ENCODE measurements at regions of chr10 and their contacts with region 1.

Region 1: GRCh38 chr10:88932539-88933256 is 19.9 kb downstream of the ACTA2 start:
- DNase-seq: peak; percentile 58
- H3K4me3 Mint-ChIP-seq: no peak overlapping the region
- H3K27ac Mint-ChIP-seq: no peak overlapping the region
- H3K4me1 Mint-ChIP-seq: peaks cover 18% of the 10 kb centered on the region
- H3K27me3 Mint-ChIP-seq: no peaks in the 10 kb centered on the region

Region 2: DNA sequence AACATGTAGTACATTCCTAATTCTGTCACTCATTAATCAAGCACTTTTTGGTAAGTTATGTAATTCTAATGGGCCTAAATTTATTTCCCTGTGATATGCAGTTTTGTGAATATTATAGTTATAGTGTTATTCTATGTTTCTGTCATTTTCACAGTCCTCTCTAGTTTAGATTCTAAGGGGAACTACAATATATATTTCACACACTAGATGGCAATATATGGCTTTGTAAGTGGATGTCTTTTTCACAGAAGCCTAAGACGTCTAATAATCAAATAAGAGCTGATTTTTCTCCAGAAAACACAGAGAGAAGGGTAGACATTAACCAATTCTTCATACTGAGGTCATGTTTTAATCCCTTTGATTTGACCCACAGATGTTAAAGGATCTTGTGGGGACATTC is 367.6 kb before region 1 on chr10:
- CTCF ChIA-PET with region 1: interaction called, 11 read pairs
- intact Hi-C with region 1: loop called (anchors 1 kb)
- DNase-seq: no peak
- H3K4me3 Mint-ChIP-seq: no peak overlapping the region
- H3K27ac Mint-ChIP-seq: no peak overlapping the region
- H3K4me1 Mint-ChIP-seq: no peaks in the 10 kb centered on the region
- H3K27me3 Mint-ChIP-seq: no peaks in the 10 kb centered on the region

Region 3: GRCh38 chr10:88835096-88835909 is 97.4 kb before region 1 on chr10:
- CTCF ChIA-PET with region 1: interaction called, 448 read pairs
- intact Hi-C with region 1: loop called (anchors 1 kb)
- DNase-seq: peak; percentile 95
- H3K4me3 Mint-ChIP-seq: no peak overlapping the region
- H3K27ac Mint-ChIP-seq: no peak overlapping the region
- H3K4me1 Mint-ChIP-seq: peaks cover 20% of the 10 kb centered on the region
- H3K27me3 Mint-ChIP-seq: no peaks in the 10 kb centered on the region

Region 4: DNA sequence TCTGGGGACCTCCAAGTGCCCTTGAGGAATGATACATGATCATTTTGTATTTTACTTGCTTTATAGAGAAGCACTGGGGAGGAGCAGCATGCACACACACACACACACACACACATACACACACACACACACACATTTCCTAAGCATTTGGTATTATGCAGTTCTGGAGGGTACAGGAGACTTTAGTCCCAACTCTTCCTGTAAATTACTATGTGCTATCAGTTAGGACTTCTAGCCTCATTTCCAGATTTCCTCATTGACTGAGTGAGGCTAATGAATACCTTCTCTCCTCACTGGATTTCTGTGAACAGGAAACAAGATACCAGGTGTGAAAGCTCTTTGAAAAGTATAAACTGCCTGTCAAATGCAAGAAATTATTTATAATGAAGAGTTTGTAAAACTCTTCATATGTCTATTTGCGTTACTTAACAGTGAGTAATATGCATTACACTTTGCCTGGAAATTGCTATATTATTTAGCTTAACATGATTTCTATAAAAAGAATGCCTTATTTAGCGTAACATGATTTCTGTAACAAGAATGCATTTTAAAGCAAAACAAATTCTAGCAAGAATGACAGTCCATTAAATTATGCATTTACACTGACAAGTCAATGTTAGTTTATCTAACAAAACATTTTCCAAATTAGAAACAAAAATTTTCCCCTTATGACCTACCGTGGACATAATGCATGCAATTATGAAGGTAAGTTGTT is 14.3 kb before region 1 on chr10:
- CTCF ChIA-PET with region 1: interaction called, 17 read pairs
- intact Hi-C with region 1: no loop called
- DNase-seq: no peak
- H3K4me3 Mint-ChIP-seq: no peak overlapping the region
- H3K27ac Mint-ChIP-seq: no peak overlapping the region
- H3K4me1 Mint-ChIP-seq: peaks cover 9% of the 10 kb centered on the region
- H3K27me3 Mint-ChIP-seq: no peaks in the 10 kb centered on the region

Region 5: DNA sequence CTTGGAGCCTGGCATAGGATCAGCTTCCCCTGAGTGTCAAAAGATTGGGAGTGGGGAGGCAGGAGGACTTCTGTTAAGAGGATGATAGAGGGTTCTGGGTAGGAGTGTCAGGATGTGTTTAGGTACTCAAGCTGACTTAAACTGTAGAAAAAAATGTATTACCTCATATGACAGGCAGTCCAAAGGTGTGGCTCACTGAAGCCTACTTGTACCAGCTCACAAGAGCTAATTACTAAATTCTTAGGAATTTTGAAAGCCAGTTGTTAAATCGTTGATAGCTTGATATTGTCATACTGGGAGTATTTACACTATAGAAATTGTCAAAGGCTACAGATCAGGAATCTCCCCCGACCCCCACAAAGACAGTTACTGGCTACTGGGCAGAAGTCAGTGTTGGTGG is 90.0 kb after region 1 on chr10:
- CTCF ChIA-PET with region 1: interaction called, 21 read pairs
- intact Hi-C with region 1: no loop called
- DNase-seq: no peak
- H3K4me3 Mint-ChIP-seq: no peak overlapping the region
- H3K27ac Mint-ChIP-seq: no peak overlapping the region
- H3K4me1 Mint-ChIP-seq: no peaks in the 10 kb centered on the region
- H3K27me3 Mint-ChIP-seq: no peaks in the 10 kb centered on the region

Region 6: DNA sequence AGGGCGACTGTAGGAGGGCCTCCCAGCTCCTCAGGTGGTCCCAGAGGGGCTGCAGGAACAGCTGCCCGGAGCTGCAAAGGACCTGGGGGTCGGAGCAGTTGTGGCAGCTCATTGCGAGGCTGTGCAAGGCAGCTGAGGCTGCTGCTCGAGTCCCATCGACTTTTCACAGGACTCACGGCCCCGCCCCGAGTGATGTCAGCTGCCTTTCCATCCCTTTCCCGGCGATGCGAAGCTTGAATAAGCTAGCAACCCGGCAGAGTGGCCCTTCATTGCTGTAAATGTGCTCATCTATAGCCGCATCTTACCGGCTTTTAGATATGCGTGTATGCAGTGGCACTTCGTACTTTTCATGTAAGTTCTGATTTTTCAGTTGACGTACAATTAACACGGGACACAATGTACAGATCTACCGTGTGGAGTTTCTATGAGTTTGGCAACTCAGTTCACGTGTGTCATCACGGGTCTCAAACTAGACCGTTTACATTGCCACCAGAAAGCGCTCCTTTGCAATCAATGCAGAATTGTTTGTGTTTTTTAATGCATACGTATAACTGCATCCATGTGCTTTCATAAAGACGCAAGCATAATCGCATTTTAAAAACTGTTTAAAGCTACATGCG is 274.6 kb after region 1 on chr10 and contains the start of gene CH25H:
- CTCF ChIA-PET with region 1: interaction called, 11 read pairs
- intact Hi-C with region 1: no loop called
- DNase-seq: peak; percentile 79
- H3K4me3 Mint-ChIP-seq: peak within 1 kb of the TSS; percentile 75
- H3K27ac Mint-ChIP-seq: no peak within 1 kb of the TSS
- H3K4me1 Mint-ChIP-seq: peaks cover 7% of the 10 kb centered on the region
- H3K27me3 Mint-ChIP-seq: peaks cover 39% of the 10 kb centered on the region
- total RNA-seq, gene CH25H: 0.12 to 0.22 TPM